ENCODE measurements at regions of chr12 and their contacts with region 1.

Region 1: DNA sequence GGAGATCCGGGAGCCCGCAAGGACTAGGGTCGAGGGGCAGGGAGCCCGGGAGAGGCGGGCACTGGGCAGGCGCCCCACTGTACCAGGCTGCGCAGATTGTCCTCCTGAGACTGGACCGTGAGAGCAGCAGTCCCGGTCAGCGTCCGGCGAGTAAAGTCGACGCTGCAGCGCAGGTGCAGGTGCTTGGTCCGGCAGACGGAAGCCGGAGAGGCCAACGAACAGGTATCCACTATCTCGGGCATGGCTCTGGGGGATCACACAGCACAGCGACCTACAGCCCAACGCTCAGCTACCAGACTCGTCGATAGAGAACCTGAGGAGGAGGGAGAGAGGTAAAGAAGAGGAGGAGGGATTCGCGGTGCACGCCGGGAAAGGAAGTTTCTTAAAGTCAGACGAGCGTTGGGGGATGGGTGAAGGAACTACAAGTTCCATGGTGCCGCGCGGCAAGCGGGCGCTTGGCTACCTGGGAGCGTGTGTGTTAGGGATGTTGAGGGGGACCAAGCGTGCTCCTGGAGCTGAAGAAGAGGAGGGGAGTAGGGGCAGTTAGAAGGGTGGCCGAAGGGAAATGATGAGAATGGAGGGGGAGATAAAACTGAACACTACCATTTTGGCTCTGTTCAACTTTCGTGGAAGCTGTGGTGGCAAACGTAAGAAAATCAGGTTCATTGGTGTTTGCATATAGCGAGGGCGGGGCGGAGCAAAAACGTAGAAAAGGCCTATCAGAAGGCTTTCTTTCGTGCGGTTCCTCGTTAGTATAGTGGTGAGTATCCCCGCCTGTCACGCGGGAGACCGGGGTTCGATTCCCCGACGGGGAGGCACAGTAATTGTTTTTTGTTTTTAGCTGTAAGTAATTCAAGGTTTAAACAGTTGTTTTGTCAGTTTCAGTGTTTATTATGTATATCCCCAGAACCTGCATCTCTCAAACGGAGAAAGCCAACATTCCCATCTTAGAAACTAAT is at the start of gene LTA4H:
- DNase-seq: peak; percentile 86 to 99 (median 97)
- ATAC-seq: peak; percentile 97
- H3K4me3 ChIP-seq: peak within 1 kb of the TSS; percentile 85
- H3K4me3 Mint-ChIP-seq: no peak within 1 kb of the TSS
- H3K27ac ChIP-seq: peak within 1 kb of the TSS; percentile 81
- H3K27ac Mint-ChIP-seq: no peak within 1 kb of the TSS
- H3K4me1 ChIP-seq: peaks cover 4 to 9% of the 10 kb centered on the region in 2 donors
- H3K4me1 Mint-ChIP-seq: peaks cover 5 to 19% (median 17%) of the 10 kb centered on the region in 7 donors
- H3K27me3 ChIP-seq: no peaks in the 10 kb centered on the region
- H3K27me3 Mint-ChIP-seq: no peaks in the 10 kb centered on the region
- total RNA-seq, gene LTA4H: 52.5 to 151 (median 63.4) TPM

Region 2: GRCh38 chr12:95473884-95474659 is 561.5 kb before region 1 on chr12 and contains the start of gene METAP2:
- CTCF ChIA-PET with region 1: no interaction called
- POLR2A ChIA-PET with region 1: interaction called, 3 read pairs
- intact Hi-C with region 1: loop called (anchors 1 to 10 kb)
- DNase-seq: peak; percentile 75 to 93 (median 87)
- ATAC-seq: peak; percentile 98
- H3K4me3 ChIP-seq: peak within 1 kb of the TSS; percentile 81
- H3K4me3 Mint-ChIP-seq: peak within 1 kb of the TSS; percentile 96 to 100 (median 99)
- H3K27ac ChIP-seq: peak within 1 kb of the TSS; percentile 92
- H3K27ac Mint-ChIP-seq: peak within 1 kb of the TSS; percentile 95 to 100 (median 99)
- H3K4me1 ChIP-seq: peaks cover 10 to 39% of the 10 kb centered on the region in 2 donors
- H3K4me1 Mint-ChIP-seq: peaks cover 31 to 70% (median 55%) of the 10 kb centered on the region in 7 donors
- H3K27me3 ChIP-seq: no peaks in the 10 kb centered on the region
- H3K27me3 Mint-ChIP-seq: no peaks in the 10 kb centered on the region
- total RNA-seq, gene METAP2: 48.2 to 79.9 (median 57.3) TPM

Region 3: GRCh38 chr12:95858479-95859343 is 176.8 kb before region 1 on chr12 and contains the start of gene SNRPF:
- CTCF ChIA-PET with region 1: no interaction called
- POLR2A ChIA-PET with region 1: no interaction called
- intact Hi-C with region 1: loop called (anchors 1 kb)
- DNase-seq: peak; percentile 88 to 96 (median 92)
- ATAC-seq: peak; percentile 98
- H3K4me3 ChIP-seq: peak within 1 kb of the TSS; percentile 82
- H3K4me3 Mint-ChIP-seq: no peak within 1 kb of the TSS
- H3K27ac ChIP-seq: peak within 1 kb of the TSS; percentile 86
- H3K27ac Mint-ChIP-seq: no peak within 1 kb of the TSS
- H3K4me1 ChIP-seq: peaks cover 11 to 12% of the 10 kb centered on the region in 2 donors
- H3K4me1 Mint-ChIP-seq: peaks cover 13 to 27% (median 16%) of the 10 kb centered on the region in 7 donors
- H3K27me3 ChIP-seq: no peaks in the 10 kb centered on the region
- H3K27me3 Mint-ChIP-seq: peaks cover 3 to 11% (median 7%) of the 10 kb centered on the region in 5 donors
- total RNA-seq, gene SNRPF: 19.0 to 40.4 (median 21.7) TPM

Region 4: GRCh38 chr12:96047229-96048211 is 12.0 kb after region 1 on chr12:
- CTCF ChIA-PET with region 1: interaction called, 3 read pairs
- POLR2A ChIA-PET with region 1: interaction called, 10 read pairs
- intact Hi-C with region 1: loop called in 1 of 2 experiments (anchors 1 kb)
- DNase-seq: peak in 6 of 9 donors; percentile 23 to 60 (median 56)
- ATAC-seq: peak; percentile 77
- H3K4me3 ChIP-seq: peak overlapping the region; percentile 8
- H3K4me3 Mint-ChIP-seq: peak overlapping the region; percentile 61 to 89 (median 76)
- H3K27ac ChIP-seq: peak overlapping the region; percentile 60
- H3K27ac Mint-ChIP-seq: peak overlapping the region; percentile 64 to 97 (median 91)
- H3K4me1 ChIP-seq: peaks cover 11 to 25% of the 10 kb centered on the region in 2 donors
- H3K4me1 Mint-ChIP-seq: peaks cover 39 to 59% (median 46%) of the 10 kb centered on the region in 7 donors
- H3K27me3 ChIP-seq: no peaks in the 10 kb centered on the region
- H3K27me3 Mint-ChIP-seq: no peaks in the 10 kb centered on the region

Region 5: DNA sequence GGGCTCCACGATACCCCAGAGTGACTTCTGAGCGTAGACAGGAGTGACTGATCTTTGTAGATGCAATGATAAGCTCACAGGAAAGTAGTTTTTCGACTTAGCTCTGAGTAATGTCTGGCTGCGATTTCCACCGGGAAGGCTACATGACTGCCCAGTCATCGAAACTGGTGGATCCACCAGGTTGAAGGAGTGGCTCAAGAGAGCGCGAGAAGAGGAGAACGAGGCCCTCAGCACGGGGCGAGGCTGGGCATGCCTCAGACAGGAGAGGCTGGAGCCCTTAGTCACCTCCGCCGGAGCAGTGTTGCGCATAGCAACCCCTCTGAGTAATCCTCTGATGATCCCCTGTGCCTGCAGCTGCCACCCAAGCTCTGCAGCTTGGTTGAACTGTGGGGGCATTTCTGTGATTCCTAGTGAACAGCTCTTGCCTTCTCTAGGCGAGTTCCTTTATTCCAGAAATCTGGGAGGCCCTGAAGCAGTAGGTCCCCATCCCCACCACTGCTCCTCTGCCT is 184.2 kb after region 1 on chr12:
- CTCF ChIA-PET with region 1: interaction called, 3 read pairs
- POLR2A ChIA-PET with region 1: interaction called, 5 read pairs
- intact Hi-C with region 1: loop called (anchors 1 kb)
- DNase-seq: no peak
- ATAC-seq: no peak
- H3K4me3 ChIP-seq: no peak overlapping the region
- H3K4me3 Mint-ChIP-seq: no peak overlapping the region
- H3K27ac ChIP-seq: no peak overlapping the region
- H3K27ac Mint-ChIP-seq: peak overlapping the region in 2 of 9 donors; percentile 20 to 51
- H3K4me1 ChIP-seq: peaks cover 6 to 7% of the 10 kb centered on the region in 2 donors
- H3K4me1 Mint-ChIP-seq: peaks cover 12 to 60% (median 40%) of the 10 kb centered on the region in 7 donors
- H3K27me3 ChIP-seq: no peaks in the 10 kb centered on the region
- H3K27me3 Mint-ChIP-seq: no peaks in the 10 kb centered on the region

Region 6: DNA sequence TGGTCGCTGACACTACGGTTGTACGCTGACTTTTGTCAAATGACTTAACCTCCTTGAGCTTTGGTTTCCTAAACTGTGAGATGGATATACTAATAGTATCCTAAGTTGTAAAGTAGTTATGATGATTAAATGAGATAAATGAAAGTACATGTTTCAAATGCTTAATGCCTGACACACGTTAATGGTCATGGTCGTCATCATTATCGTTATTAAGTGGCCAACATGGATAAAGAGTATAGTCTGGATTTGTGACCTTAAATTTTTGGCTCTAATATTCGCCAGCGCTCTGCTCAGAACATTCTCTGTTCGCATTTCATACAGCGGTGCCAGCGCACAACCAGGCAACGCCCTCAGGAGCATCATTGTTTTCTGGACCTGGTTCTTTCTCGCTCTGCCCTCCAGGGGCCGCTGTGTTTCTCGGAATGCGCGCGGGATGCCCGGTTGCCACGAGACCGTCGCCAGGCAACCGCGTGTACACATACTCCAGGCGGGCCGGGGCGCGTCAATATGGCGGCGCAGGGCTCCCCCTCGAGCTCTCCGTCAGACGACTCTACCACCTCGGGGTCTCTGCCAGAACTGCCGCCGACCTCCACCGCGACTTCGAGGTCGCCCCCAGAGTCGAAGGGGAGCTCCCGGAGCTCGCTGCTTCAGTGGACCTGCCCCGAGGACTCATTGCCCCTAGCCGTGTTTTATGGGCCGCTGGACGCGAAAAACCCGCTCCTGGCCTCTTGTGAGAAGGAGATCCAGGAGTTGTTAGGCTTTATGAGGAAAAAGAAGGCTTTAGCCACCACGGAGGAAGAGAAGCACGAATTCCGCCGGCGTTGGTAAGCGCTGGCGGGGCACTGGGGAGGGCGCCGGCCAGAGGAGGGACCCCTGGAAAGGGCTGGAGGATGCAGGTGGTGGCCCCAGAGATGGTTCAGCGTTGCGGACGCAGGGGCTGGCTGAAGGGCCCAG is 453.8 kb after region 1 on chr12 and contains the start of gene CFAP54:
- CTCF ChIA-PET with region 1: no interaction called
- POLR2A ChIA-PET with region 1: no interaction called
- intact Hi-C with region 1: loop called (anchors 1 to 2 kb)
- DNase-seq: peak; percentile 91 to 97 (median 94)
- ATAC-seq: peak; percentile 96
- H3K4me3 ChIP-seq: peak within 1 kb of the TSS; percentile 71
- H3K4me3 Mint-ChIP-seq: peak within 1 kb of the TSS; percentile 77 to 93 (median 88)
- H3K27ac ChIP-seq: peak within 1 kb of the TSS; percentile 66
- H3K27ac Mint-ChIP-seq: peak within 1 kb of the TSS; percentile 68 to 96 (median 89)
- H3K4me1 ChIP-seq: peaks cover 7 to 12% of the 10 kb centered on the region in 2 donors
- H3K4me1 Mint-ChIP-seq: peaks cover 14 to 37% (median 22%) of the 10 kb centered on the region in 7 donors
- H3K27me3 ChIP-seq: no peaks in the 10 kb centered on the region
- H3K27me3 Mint-ChIP-seq: peaks cover 0 to 33% (median 0%) of the 10 kb centered on the region in 5 donors
- total RNA-seq, gene CFAP54: 0.22 to 0.93 (median 0.30) TPM